Activated CD4-positive, alpha-beta T cell treated with anti-CD3 and anti-CD28 coated beads for 36 hours (primary cell): ENCODE measurements at regions of chr17 and their contacts with region 1.

Region 1: GRCh38 chr17:7403977-7404736 is at the start of gene TMEM256:
- DNase-seq: peak; percentile 99
- ATAC-seq: peak; percentile 94
- H3K4me3 Mint-ChIP-seq: peak within 1 kb of the TSS; percentile 89
- H3K27ac Mint-ChIP-seq: peak within 1 kb of the TSS; percentile 92
- H3K4me1 Mint-ChIP-seq: peaks cover 16% of the 10 kb centered on the region
- H3K27me3 Mint-ChIP-seq: peaks cover 2% of the 10 kb centered on the region
- total RNA-seq, gene TMEM256: 55.8 to 58.1 TPM

Region 2: DNA sequence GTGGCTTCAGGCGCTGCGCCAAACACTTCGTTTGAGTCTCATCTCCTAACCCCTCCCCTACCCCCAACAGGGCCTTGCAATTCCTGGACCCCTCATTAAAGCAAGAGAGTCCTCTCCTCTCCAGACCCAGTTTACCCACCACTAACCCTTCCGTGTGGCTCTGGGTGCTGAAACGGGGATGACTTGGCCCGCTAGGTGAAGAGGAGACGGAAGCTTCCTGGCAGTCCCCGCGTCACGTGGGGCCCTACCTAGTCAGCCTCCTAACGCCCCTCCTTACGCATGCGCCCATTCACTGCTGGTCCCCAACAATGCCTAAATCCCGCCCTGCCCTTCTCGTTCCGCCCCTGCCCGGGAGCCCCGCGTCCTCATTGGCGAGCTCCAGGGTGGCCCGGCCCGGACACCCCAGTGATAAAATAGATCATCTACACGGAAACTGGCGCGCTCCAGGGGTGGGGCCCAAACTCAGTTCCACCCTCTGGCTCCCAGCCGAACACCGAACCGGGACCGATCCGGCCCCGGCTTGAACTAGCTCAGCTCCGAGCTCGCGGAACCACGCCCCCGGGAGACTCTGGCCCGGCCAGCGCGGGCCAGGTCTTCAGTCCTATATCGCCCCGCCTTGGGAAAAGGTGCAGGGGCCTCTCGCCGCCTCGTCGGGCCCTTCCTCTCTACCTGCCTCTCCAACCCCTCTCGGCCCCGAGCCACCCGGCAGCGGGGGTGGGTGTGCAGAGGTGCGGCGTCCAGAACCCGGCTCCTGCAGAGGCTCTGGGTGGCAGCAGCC is 368.4 kb before region 1 on chr17 and contains the start of gene SLC16A13:
- CTCF ChIA-PET with region 1: no interaction called
- POLR2A ChIA-PET with region 1: interaction called, 4 read pairs
- intact Hi-C with region 1: loop called in 1 of 2 experiments (anchors 5 kb)
- DNase-seq: peak; percentile 99
- ATAC-seq: peak; percentile 95
- H3K4me3 Mint-ChIP-seq: peak within 1 kb of the TSS; percentile 86
- H3K27ac Mint-ChIP-seq: peak within 1 kb of the TSS; percentile 96
- H3K4me1 Mint-ChIP-seq: peaks cover 45% of the 10 kb centered on the region
- H3K27me3 Mint-ChIP-seq: no peaks in the 10 kb centered on the region
- total RNA-seq, gene SLC16A13: 8.3 to 9.6 TPM

Region 3: DNA sequence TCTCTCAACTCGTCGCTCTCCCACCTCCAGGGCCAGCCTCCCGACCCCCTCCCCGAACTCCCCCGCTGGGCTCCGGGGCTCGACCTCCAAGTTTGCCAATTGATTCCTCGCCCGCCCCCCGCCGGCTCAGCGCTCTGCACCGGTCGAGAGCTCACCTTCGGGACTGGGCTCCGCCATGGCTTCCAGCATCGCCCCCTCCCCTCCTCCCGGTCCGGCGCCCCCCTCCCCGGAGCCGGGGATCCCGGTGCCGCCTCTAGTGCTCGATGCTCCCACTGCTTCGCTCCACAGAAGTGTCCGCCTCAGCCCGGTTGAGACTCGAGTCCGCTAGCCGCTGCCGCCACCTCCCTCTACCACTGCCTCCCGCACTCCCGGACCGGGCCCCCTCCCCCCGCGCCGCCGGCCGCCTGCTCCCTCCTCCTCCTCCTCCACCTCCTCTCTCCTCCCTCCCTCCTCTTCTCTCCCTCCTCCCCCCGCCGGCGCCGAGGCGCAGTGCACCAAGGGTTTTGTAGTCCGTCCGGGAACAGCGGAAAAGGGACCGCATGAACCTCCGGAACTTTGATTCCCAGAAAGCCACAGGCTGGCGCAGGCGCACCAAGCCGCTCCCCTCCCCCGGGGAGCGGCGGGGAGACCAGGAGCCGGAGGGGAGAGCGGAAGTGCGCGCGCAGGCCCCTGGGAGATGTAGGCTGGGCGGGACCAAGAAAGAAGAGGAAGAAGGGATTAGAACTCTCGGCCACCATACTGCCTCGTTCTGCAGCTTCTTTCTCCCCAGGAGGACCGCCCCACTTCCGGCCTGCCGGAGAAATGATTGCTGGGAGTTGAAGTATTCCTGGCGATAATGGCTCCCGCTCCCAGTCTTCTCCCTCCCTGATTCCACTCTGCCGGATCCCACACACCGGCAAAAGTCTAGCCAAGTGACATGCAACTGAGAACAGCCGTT is 164.8 kb before region 1 on chr17 and contains the start of gene PHF23:
- CTCF ChIA-PET with region 1: no interaction called
- POLR2A ChIA-PET with region 1: interaction called, 5 read pairs
- intact Hi-C with region 1: loop called in 1 of 2 experiments (anchors 1 kb)
- DNase-seq: peak; percentile 99
- ATAC-seq: peak; percentile 74
- H3K4me3 Mint-ChIP-seq: peak within 1 kb of the TSS; percentile 97
- H3K27ac Mint-ChIP-seq: peak within 1 kb of the TSS; percentile 93
- H3K4me1 Mint-ChIP-seq: peaks cover 61% of the 10 kb centered on the region
- H3K27me3 Mint-ChIP-seq: no peaks in the 10 kb centered on the region
- total RNA-seq, gene PHF23: 23.6 to 35.2 TPM

Region 4: GRCh38 chr17:7314719-7315569 is 89.2 kb before region 1 on chr17 and contains the start of gene GPS2:
- CTCF ChIA-PET with region 1: no interaction called
- POLR2A ChIA-PET with region 1: interaction called, 3 read pairs
- intact Hi-C with region 1: loop called in 1 of 2 experiments (anchors 1 kb)
- DNase-seq: peak; percentile 97
- ATAC-seq: peak; percentile 82
- H3K4me3 Mint-ChIP-seq: peak within 1 kb of the TSS; percentile 77
- H3K27ac Mint-ChIP-seq: peak within 1 kb of the TSS; percentile 84
- H3K4me1 Mint-ChIP-seq: peaks cover 48% of the 10 kb centered on the region
- H3K27me3 Mint-ChIP-seq: no peaks in the 10 kb centered on the region
- total RNA-seq, gene GPS2: 31.3 to 56.1 TPM

Region 5: DNA sequence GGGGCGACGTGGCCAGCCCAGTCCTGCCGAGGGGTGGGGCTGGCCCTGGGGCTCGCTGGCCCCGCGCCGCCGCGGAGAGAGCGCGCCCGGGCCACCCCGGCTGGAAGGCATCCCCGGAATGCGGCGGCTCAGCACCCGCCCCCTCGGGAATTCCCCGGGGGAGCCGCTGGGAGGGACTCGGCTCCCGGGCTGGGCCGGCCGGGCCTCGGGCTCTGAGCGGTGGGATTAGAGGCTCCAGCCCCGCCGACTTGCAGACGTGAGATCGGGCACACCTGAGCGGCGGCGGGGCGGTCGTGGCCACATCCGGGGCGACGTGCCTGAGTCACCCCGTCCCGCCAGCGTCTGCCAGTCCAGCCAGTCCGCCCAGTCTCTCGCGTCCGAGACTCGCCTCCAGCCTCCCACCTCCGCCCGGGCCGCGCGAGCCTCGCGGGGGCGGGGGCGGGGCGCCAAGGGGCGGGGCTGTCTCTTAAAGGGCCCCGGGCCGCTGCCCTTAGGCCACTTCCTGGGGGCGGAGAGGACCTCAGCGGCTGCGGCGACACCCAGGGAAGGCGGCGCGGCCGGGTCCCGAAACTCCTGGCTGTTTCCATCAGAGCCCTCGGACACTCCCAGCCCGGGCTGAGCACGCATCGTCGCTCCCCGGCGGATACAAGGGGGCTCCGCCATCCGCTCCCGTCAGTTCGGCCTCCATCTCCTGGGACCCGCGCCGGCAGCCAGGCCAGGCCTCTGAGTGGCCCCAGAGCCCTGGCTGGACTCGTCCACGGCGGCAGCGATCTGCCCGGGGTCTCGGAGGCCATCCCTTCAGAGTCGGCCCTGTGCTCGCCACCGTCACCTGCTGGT is 52.3 kb before region 1 on chr17 and contains the start of gene KCTD11:
- CTCF ChIA-PET with region 1: interaction called, 5 read pairs
- POLR2A ChIA-PET with region 1: no interaction called
- intact Hi-C with region 1: loop called in 1 of 2 experiments (anchors 1 kb)
- DNase-seq: peak; percentile 90
- ATAC-seq: peak; percentile 58
- H3K4me3 Mint-ChIP-seq: peak within 1 kb of the TSS; percentile 79
- H3K27ac Mint-ChIP-seq: peak within 1 kb of the TSS; percentile 84
- H3K4me1 Mint-ChIP-seq: peaks cover 55% of the 10 kb centered on the region
- H3K27me3 Mint-ChIP-seq: no peaks in the 10 kb centered on the region
- total RNA-seq, gene KCTD11: 5.0 to 6.1 TPM

Region 6: DNA sequence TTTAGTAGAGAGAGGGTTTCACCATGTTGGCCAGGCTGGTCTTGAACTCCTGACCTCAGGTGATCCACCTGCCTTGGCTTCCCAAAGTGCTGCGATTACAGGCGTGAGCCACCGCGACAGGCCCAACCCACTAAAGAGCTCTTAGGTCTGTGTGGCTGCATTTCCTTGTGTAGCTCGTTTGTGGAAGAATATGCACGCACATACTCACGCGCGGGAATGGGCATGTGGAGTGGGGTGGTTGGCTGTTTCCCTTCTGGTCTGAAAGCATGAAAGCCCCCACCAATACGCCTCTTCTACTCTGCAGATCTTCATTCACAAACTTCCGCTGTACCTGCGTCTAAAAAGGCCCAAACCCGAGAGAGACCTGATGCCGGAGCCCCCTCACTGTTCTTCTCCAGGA is 50.8 kb after region 1 on chr17:
- CTCF ChIA-PET with region 1: no interaction called
- POLR2A ChIA-PET with region 1: no interaction called
- intact Hi-C with region 1: loop called in 1 of 2 experiments (anchors 1 kb)
- DNase-seq: no peak
- ATAC-seq: no peak
- H3K4me3 Mint-ChIP-seq: peak overlapping the region; percentile 96
- H3K27ac Mint-ChIP-seq: peak overlapping the region; percentile 93
- H3K4me1 Mint-ChIP-seq: peaks cover 19% of the 10 kb centered on the region
- H3K27me3 Mint-ChIP-seq: no peaks in the 10 kb centered on the region

Region 7: GRCh38 chr17:7614422-7615264 is 210.5 kb after region 1 on chr17 and contains the start of gene FXR2:
- CTCF ChIA-PET with region 1: no interaction called
- POLR2A ChIA-PET with region 1: no interaction called
- intact Hi-C with region 1: loop called in 1 of 2 experiments (anchors 1 kb)
- DNase-seq: peak; percentile 100
- ATAC-seq: peak; percentile 95
- H3K4me3 Mint-ChIP-seq: peak within 1 kb of the TSS; percentile 85
- H3K27ac Mint-ChIP-seq: peak within 1 kb of the TSS; percentile 93
- H3K4me1 Mint-ChIP-seq: peaks cover 32% of the 10 kb centered on the region
- H3K27me3 Mint-ChIP-seq: no peaks in the 10 kb centered on the region
- total RNA-seq, gene FXR2: 35.6 to 50.2 TPM